ENCODE measurements at regions of chr18 and their contacts with region 1.

Region 1: GRCh38 chr18:24726727-24727492 is 266.5 kb downstream of the HRH4 start:
- DNase-seq: no peak
- ATAC-seq: peak; percentile 57

Region 2: DNA sequence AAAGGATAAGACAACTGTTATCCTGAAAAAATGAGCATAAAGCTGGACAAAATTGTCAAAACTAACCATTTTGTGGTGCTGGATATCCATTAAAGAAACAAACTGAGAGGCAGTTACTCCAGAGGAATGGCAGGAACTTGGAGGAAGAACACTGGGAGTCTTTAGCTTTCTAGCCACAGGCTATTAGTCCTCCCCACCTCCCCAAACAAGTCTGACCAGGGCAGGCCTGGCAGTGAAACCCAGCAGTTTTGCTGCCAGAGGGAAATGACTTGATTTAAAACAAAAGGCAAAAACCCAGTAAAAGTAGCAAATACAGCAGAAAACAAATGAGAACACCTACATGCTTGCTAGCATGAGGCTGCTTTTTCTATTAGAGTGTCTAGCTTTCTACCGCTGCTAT is 364.2 kb before region 1 on chr18:
- intact Hi-C with region 1: loop called (anchors 5 kb)
- DNase-seq: no peak
- ATAC-seq: no peak

Measured in Right ventricle myocardium inferior (tissue), 1 donor.